ENCODE measurements at regions of chr4 and their contacts with region 1.

Region 1: GRCh38 chr4:82601242-82602015 is 39.6 kb upstream of the TMEM150C start:
- DNase-seq: no peak
- ATAC-seq: peak; percentile 85

Region 2: GRCh38 chr4:81796790-81797528 is 804.5 kb before region 1 on chr4:
- intact Hi-C with region 1: loop called (anchors 5 kb)
- DNase-seq: no peak
- ATAC-seq: no peak

Measured in sciatic nerve (tissue), 2 donors.